Natural killer cell (primary cell): ENCODE measurements at regions of chr1 and their contacts with region 1.

Region 1: DNA sequence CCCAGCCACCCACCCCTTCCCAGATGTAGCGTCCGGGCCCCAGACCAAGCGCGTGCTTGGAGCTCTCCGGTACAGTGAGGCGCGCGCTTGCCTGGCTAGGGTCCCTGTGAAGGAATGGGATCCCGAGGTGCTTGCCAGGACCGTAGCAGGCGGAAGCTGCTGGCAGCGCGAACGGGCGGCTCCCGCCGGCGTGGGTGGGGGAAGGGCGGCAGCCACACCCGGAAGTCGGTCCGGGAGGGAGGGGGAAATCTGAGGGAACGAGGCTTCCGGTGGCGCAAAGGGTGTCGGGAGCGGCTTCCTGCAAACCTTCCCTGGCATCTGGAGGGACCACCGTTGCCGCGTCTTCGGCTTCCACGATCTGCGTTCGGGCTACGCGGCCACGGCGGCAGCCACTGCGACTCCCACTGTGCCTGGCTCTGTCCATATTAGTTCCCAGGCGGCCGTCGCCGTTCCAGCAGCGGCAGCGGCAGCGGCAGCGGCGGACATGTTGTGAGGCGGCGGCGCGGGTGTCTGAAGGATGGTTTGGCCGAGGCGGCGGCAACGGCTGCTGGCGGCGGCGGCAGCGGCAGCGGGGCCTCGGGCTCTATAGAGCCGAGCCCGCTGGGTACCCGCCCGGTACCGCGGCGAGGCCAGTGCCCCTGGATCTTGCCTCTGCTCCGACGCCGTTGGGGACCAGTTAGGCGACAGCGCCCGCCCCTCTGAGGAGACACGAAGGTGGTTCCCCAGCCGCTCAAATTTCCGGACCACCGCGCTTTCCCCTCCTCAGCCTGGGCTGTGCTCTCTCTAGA is at the start of gene DR1:
- DNase-seq: peak; percentile 86 to 94
- ATAC-seq: peak; percentile 74 to 89 (median 78)
- H3K4me3 ChIP-seq: peak within 1 kb of the TSS; percentile 83
- H3K4me3 Mint-ChIP-seq: peak within 1 kb of the TSS; percentile 100
- H3K27ac ChIP-seq: peak within 1 kb of the TSS; percentile 89
- H3K27ac Mint-ChIP-seq: peak within 1 kb of the TSS; percentile 99 to 100
- H3K4me1 ChIP-seq: no peaks in the 10 kb centered on the region
- H3K4me1 Mint-ChIP-seq: peaks cover 46 to 48% of the 10 kb centered on the region in 2 donors
- H3K27me3 ChIP-seq: no peaks in the 10 kb centered on the region
- H3K27me3 Mint-ChIP-seq: no peaks in the 10 kb centered on the region
- CTCF ChIP-seq: no peak
- total RNA-seq, gene DR1: 84.3 to 91.4 (median 85.3) TPM

Region 2: DNA sequence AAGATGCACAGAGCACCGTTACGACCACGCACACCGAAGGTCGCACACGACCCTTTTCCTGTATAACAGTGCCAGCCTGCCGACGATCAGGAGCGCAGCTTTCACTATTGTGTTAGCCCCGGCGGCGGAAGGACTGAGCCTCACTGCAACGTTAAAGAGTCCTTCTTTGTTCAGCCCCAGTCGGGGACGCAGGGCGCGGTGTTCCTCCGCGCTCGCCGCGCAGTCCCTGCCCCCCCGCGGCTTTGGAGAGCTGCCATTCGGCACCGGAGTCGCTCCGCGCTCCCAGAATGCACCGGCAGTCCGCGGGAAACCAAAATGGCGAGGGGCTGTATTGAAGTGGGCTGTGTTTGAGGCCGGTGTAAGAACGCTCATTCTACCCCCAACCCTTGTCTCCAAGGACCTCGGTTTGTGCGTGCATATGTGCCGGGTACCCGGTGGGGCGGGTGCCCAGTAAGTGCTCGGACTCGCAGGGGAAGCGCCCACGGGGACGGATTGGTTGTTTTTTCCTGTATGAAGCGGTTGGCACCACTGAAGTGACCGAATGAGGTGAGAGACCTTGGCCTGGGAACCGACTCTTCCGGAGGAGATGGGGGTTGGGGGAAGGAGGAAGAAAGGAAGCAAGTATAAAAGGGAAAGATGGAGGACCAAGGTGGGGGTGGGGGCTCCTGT is 266.7 kb before region 1 on chr1 and contains the start of gene MTF2:
- intact Hi-C with region 1: loop called (anchors 1 kb)
- DNase-seq: peak; percentile 87 to 96
- ATAC-seq: peak; percentile 89 to 95 (median 92)
- H3K4me3 ChIP-seq: peak within 1 kb of the TSS; percentile 82
- H3K4me3 Mint-ChIP-seq: peak within 1 kb of the TSS; percentile 94
- H3K27ac ChIP-seq: peak within 1 kb of the TSS; percentile 83
- H3K27ac Mint-ChIP-seq: peak within 1 kb of the TSS; percentile 92 to 99
- H3K4me1 ChIP-seq: peaks cover 16% of the 10 kb centered on the region
- H3K4me1 Mint-ChIP-seq: peaks cover 40 to 52% of the 10 kb centered on the region in 2 donors
- H3K27me3 ChIP-seq: no peaks in the 10 kb centered on the region
- H3K27me3 Mint-ChIP-seq: no peaks in the 10 kb centered on the region
- CTCF ChIP-seq: no peak
- total RNA-seq, gene MTF2: 46.1 to 65.7 (median 47.8) TPM

Region 3: GRCh38 chr1:93328809-93329760 is 16.7 kb before region 1 on chr1:
- intact Hi-C with region 1: no loop called
- DNase-seq: no peak
- ATAC-seq: no peak
- H3K4me3 ChIP-seq: no peak overlapping the region
- H3K4me3 Mint-ChIP-seq: no peak overlapping the region
- H3K27ac ChIP-seq: no peak overlapping the region
- H3K27ac Mint-ChIP-seq: no peak overlapping the region
- H3K4me1 ChIP-seq: no peaks in the 10 kb centered on the region
- H3K4me1 Mint-ChIP-seq: no peaks in the 10 kb centered on the region
- H3K27me3 ChIP-seq: no peaks in the 10 kb centered on the region
- H3K27me3 Mint-ChIP-seq: no peaks in the 10 kb centered on the region
- CTCF ChIP-seq: no peak